ENCODE measurements at regions of chr1 and their contacts with region 1.

Region 1: GRCh38 chr1:155084722-155085503 is 6.3 kb downstream of the EFNA3 start:
- DNase-seq: peak; percentile 98
- H3K4me3 Mint-ChIP-seq: peak overlapping the region; percentile 100
- H3K27ac Mint-ChIP-seq: peak overlapping the region; percentile 96
- H3K4me1 Mint-ChIP-seq: peaks cover 28% of the 10 kb centered on the region
- H3K27me3 Mint-ChIP-seq: peaks cover 19% of the 10 kb centered on the region
- CTCF ChIP-seq: peak; percentile 89

Region 2: DNA sequence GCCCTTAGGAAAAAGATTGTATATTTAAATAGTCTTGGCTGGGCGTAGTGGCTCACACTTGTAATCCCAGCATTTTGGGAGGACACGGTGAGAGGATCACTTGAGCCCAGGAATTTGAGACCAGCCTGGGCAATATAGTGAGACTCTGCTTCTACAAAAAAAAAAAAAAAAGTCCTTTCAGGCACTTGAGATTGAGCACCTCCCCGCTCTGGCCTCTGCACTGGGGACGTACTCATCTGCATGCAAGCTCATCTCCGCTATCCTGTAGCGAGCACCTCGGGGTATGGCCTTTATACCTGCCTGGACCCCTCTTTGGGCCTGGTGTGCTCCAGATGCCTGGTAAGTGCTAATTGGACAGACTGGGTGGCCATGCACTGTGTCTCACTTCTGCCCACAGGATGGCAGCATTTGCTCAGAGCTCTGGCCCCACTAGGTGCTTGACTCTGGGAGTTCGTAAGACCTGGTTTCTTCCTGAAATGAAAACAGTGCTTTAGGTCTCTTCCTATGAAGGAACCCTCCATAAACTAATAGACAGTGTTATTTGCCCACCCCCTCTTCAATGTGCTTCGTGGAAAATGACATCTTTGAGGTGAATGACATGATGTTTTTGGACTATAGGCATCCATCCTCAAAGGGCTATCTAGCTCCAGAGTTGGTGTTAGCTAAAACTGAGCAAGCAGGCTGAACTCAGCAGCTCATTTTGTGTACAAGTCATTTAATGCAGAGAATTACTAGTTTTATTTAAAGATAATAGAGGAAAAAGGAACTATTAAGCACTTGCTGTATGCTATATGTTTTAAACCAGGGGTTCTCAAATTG is 415.2 kb before region 1 on chr1:
- CTCF ChIA-PET with region 1: interaction called, 3 read pairs
- POLR2A ChIA-PET with region 1: interaction called, 3 read pairs
- intact Hi-C with region 1: loop called (anchors 1 kb)
- DNase-seq: peak; percentile 88
- H3K4me3 Mint-ChIP-seq: no peak overlapping the region
- H3K27ac Mint-ChIP-seq: no peak overlapping the region
- H3K4me1 Mint-ChIP-seq: no peaks in the 10 kb centered on the region
- H3K27me3 Mint-ChIP-seq: peaks cover 19% of the 10 kb centered on the region
- CTCF ChIP-seq: peak; percentile 96

Region 3: GRCh38 chr1:154694995-154695394 is 389.9 kb before region 1 on chr1:
- CTCF ChIA-PET with region 1: no interaction called
- POLR2A ChIA-PET with region 1: no interaction called
- intact Hi-C with region 1: no loop called
- DNase-seq: no peak
- H3K4me3 Mint-ChIP-seq: no peak overlapping the region
- H3K27ac Mint-ChIP-seq: no peak overlapping the region
- H3K4me1 Mint-ChIP-seq: no peaks in the 10 kb centered on the region
- H3K27me3 Mint-ChIP-seq: peaks cover 64% of the 10 kb centered on the region
- CTCF ChIP-seq: no peak

Region 4: DNA sequence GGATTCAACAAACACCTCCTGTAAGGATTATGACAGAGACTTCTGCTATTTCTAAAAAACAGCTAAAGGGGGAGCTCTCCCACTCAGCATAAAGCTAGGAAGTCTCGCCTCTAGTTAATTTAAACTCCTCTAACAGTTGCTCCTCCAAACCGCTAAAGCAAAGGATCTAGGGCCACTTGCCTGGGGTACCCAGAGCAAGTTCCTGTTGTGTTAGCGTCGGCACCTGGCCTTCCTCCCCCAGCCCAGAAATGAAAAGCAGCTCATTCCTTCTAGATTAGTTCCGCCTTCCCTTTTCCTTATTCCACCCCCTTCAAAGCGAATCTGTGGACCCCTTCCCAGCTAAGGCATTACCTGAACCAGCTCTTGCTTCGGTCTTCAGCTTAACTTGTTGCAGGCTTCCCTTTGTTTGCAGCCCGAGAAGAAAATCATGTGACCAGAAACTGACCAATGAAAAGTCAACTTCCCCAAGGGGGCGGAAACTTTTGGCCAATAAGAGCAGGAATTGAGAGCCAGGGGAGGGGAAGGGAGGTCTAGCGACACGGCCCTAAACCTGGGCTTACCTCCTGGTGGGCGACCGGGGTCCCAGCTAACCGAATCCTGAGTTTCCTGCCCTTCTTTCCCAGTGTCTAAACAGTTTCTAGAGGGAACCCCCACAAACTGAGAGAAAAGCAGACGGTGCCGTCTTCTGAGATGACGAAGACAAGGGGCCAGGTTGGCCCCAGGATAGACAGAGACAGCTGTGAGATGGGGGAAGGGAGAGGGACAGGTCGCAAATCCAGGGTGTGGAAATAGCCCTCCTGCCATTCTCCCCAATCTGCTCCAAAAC is 129.0 kb before region 1 on chr1 and contains the start of gene PBXIP1:
- CTCF ChIA-PET with region 1: interaction called, 10 read pairs
- POLR2A ChIA-PET with region 1: interaction called, 15 read pairs
- intact Hi-C with region 1: no loop called
- DNase-seq: peak; percentile 97
- H3K4me3 Mint-ChIP-seq: peak within 1 kb of the TSS; percentile 88
- H3K27ac Mint-ChIP-seq: peak within 1 kb of the TSS; percentile 68
- H3K4me1 Mint-ChIP-seq: peaks cover 43% of the 10 kb centered on the region
- H3K27me3 Mint-ChIP-seq: no peaks in the 10 kb centered on the region
- CTCF ChIP-seq: peak; percentile 24
- total RNA-seq, gene PBXIP1: 11.3 TPM in 2 replicates

Region 5: DNA sequence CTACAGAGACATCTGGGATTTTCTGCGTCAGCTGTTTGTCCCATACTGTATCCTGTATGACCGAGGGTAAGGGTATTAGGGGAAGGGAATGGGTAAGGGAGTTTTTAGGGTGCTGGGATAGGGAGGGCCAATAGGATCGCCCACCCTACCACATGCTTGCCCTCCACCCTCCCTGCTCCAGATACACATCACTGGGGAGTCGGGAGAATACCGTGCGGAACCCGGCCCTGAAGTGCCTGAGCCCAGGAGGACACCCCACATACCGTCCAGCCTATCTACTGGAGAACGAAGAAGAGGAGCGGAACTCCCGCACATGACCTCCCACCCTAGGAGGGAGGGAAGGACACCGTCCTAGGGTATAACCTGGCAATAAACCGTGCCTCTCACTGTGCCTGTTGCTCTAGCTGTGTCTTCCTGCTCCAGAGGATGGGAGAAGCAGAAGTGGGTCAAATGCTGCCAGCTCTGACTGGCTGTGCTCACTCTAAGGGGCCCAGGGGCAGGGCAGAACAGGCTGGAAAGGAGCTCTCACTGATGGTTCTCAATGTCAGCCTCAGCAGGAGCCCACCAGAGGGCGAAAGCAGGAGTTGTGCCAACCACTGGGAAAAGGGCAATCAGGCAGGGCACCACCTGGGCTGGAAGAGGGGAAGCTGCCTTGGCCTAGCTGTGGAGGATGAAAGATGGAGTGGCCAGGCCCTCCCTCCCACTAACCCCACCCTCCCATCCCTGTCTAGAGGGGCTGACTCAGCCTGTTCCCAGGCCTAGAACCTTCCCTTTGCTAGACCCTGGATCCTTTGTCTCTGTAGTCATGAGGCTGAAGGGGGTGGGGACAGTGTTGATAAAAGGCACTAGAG is 92.0 kb before region 1 on chr1:
- CTCF ChIA-PET with region 1: interaction called, 15 read pairs
- POLR2A ChIA-PET with region 1: interaction called, 4 read pairs
- intact Hi-C with region 1: no loop called
- DNase-seq: no peak
- H3K4me3 Mint-ChIP-seq: no peak overlapping the region
- H3K27ac Mint-ChIP-seq: peak overlapping the region; percentile 50
- H3K4me1 Mint-ChIP-seq: peaks cover 32% of the 10 kb centered on the region
- H3K27me3 Mint-ChIP-seq: no peaks in the 10 kb centered on the region
- CTCF ChIP-seq: no peak

Region 6: GRCh38 chr1:155050560-155051341 is 34.2 kb before region 1 on chr1 and contains the start of gene ADAM15:
- CTCF ChIA-PET with region 1: interaction called, 71 read pairs
- POLR2A ChIA-PET with region 1: interaction called, 27 read pairs
- intact Hi-C with region 1: loop called (anchors 1 kb)
- DNase-seq: peak; percentile 84
- H3K4me3 Mint-ChIP-seq: peak within 1 kb of the TSS; percentile 90
- H3K27ac Mint-ChIP-seq: peak within 1 kb of the TSS; percentile 80
- H3K4me1 Mint-ChIP-seq: peaks cover 33% of the 10 kb centered on the region
- H3K27me3 Mint-ChIP-seq: no peaks in the 10 kb centered on the region
- CTCF ChIP-seq: peak; percentile 99
- total RNA-seq, gene ADAM15: 385 and 456 TPM in 2 replicates

Region 7: DNA sequence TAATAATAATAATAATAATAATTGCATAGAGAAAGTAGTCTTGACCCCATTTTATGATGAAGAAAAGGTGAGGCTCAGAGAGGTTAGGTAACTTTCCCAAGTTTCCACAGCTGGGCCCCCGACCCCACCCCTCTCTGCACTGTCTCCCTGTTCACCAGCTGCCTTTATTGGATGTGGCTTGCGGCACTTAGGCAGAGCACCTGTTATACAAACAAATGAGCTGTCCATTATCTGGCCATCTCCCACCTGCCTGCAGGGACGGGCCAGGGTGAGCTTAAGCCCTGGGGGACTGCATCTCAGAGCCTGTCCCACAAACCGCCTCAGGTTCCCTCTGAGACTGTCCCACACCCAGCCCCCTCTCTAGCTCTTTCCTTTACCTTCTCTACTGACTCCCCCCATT is 32.7 kb after region 1 on chr1:
- CTCF ChIA-PET with region 1: interaction called, 14 read pairs
- POLR2A ChIA-PET with region 1: interaction called, 3 read pairs
- intact Hi-C with region 1: no loop called
- DNase-seq: no peak
- H3K4me3 Mint-ChIP-seq: no peak overlapping the region
- H3K27ac Mint-ChIP-seq: no peak overlapping the region
- H3K4me1 Mint-ChIP-seq: no peaks in the 10 kb centered on the region
- H3K27me3 Mint-ChIP-seq: no peaks in the 10 kb centered on the region
- CTCF ChIP-seq: no peak

Region 8: GRCh38 chr1:155172732-155173477 is 88.0 kb after region 1 on chr1 and contains the start of gene KRTCAP2:
- CTCF ChIA-PET with region 1: interaction called, 380 read pairs
- POLR2A ChIA-PET with region 1: interaction called, 19 read pairs
- intact Hi-C with region 1: no loop called
- DNase-seq: peak; percentile 98
- H3K4me3 Mint-ChIP-seq: peak within 1 kb of the TSS; percentile 87
- H3K27ac Mint-ChIP-seq: peak within 1 kb of the TSS; percentile 95
- H3K4me1 Mint-ChIP-seq: peaks cover 46% of the 10 kb centered on the region
- H3K27me3 Mint-ChIP-seq: no peaks in the 10 kb centered on the region
- CTCF ChIP-seq: peak; percentile 97
- total RNA-seq, gene KRTCAP2: 313 and 383 TPM in 2 replicates

Region 9: GRCh38 chr1:155313261-155313660 is 228.3 kb after region 1 on chr1:
- CTCF ChIA-PET with region 1: no interaction called
- POLR2A ChIA-PET with region 1: no interaction called
- intact Hi-C with region 1: no loop called
- DNase-seq: no peak
- H3K4me3 Mint-ChIP-seq: no peak overlapping the region
- H3K27ac Mint-ChIP-seq: peak overlapping the region; percentile 80
- H3K4me1 Mint-ChIP-seq: peaks cover 14% of the 10 kb centered on the region
- H3K27me3 Mint-ChIP-seq: no peaks in the 10 kb centered on the region
- CTCF ChIP-seq: no peak

Measured in MCF 10A (cell line).